ENCODE measurements at regions of chr4 and their contacts with region 1.

Region 1: DNA sequence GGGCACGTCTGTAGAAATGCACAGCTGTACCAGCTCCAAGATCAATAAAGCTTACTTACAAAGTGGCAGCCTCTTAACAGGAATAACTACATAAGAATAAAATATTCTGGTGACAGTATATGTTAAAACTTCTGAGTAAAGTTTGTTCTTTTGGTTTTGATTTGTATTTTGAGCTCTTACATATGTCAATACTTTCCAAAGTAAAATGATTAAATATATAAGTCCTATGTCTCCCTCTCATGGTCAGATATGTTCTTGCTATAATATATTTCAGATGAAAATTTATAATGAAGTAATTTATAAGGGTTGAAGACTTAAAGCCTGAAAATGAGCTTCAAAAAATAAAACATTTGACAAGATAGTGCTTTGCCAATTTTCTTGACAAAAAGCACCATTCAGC is 254.4 kb downstream of the NPFFR2 start:
- DNase-seq: no peak
- H3K4me3 ChIP-seq: no peak overlapping the region
- H3K27ac ChIP-seq: no peak overlapping the region
- H3K4me1 ChIP-seq: no peaks in the 10 kb centered on the region
- H3K27me3 ChIP-seq: no peaks in the 10 kb centered on the region
- CTCF ChIP-seq: peak; percentile 63

Region 2: GRCh38 chr4:71732706-71733105 is 553.5 kb before region 1 on chr4:
- CTCF ChIA-PET with region 1: no interaction called
- POLR2A ChIA-PET with region 1: no interaction called
- intact Hi-C with region 1: loop called (anchors 1 kb)
- DNase-seq: no peak
- H3K4me3 ChIP-seq: no peak overlapping the region
- H3K27ac ChIP-seq: no peak overlapping the region
- H3K4me1 ChIP-seq: no peaks in the 10 kb centered on the region
- H3K27me3 ChIP-seq: no peaks in the 10 kb centered on the region
- CTCF ChIP-seq: peak; percentile 62

Region 3: DNA sequence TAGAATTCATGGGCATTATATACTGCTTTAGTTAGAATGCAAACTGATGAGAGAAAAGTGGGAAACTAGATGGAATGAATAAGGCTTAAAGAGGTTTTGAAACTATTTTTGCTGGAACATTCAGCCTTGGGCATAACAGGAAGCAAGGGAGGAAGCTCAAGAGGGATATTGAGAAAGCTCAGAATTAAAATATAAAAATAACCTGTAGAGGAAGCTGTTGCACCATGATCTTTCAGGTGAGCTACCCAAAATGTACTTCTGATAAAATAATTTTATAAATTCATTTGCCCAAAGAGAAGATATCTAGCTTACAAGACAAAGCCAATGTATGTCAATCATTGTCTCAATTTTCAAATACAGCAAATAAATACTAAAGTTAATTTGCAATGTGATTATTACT is 513.6 kb before region 1 on chr4:
- CTCF ChIA-PET with region 1: interaction called, 5 read pairs
- POLR2A ChIA-PET with region 1: no interaction called
- intact Hi-C with region 1: loop called (anchors 5 kb)
- DNase-seq: no peak
- H3K4me3 ChIP-seq: no peak overlapping the region
- H3K27ac ChIP-seq: no peak overlapping the region
- H3K4me1 ChIP-seq: no peaks in the 10 kb centered on the region
- H3K27me3 ChIP-seq: no peaks in the 10 kb centered on the region
- CTCF ChIP-seq: no peak

Region 4: DNA sequence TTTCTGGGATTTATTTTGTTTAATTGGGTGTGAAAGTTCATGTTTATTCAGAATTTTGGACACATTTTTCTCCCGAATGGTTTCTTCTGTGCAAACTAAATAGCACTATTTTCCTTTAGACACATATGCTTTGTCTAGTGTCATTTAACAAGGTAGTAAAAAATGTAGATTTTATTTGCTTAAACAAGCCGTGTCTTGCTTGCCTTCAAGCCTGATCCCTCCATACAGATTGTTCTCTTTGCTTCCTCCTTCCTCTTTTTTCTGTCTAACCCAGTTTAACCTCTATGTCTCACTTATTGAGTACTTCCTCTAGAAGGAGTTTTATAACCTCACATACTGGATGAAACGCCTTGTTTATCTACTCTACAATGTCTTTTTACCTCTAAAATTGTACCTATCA is 42.5 kb before region 1 on chr4:
- CTCF ChIA-PET with region 1: no interaction called
- POLR2A ChIA-PET with region 1: no interaction called
- intact Hi-C with region 1: no loop called
- DNase-seq: no peak
- H3K4me3 ChIP-seq: no peak overlapping the region
- H3K27ac ChIP-seq: no peak overlapping the region
- H3K4me1 ChIP-seq: no peaks in the 10 kb centered on the region
- H3K27me3 ChIP-seq: no peaks in the 10 kb centered on the region
- CTCF ChIP-seq: no peak

Measured in PC-9 (cell line).